Pancreas (tissue), 10 donors: ENCODE measurements at regions of chr1 and their contacts with region 1.

Region 1: DNA sequence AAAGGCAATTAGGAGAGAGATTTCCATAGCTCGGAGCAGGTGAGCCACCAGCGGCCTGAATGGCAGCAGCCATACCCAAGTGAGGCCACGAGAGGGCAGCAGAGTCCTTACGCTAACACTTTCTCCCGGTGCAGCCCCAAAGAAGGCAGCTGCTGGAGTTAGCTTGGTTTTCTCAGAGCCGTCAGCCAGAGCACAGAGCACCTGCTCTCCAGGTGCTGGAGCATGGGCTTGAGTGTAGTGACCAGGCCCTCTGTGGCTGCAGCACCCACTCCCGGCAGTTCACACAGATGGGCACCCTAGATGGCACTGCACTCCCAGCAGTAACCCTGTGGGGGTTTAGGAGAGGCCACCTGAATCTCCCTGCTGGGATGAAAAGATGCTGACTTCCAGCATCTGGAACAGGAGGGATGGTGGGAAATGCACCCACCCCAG is 45.8 kb downstream of the TMCC2 start:
- DNase-seq: peak; percentile 85 to 96 (median 92)
- ATAC-seq: peak; percentile 73 to 91 (median 84)
- H3K4me3 ChIP-seq: no peak overlapping the region
- H3K27ac ChIP-seq: peak overlapping the region; percentile 49 to 72 (median 57)
- H3K4me1 ChIP-seq: peaks cover 14 to 17% (median 16%) of the 10 kb centered on the region in 3 donors
- H3K27me3 ChIP-seq: no peaks in the 10 kb centered on the region
- CTCF ChIP-seq: peak; percentile 97 to 99 (median 98)

Region 2: GRCh38 chr1:205325334-205325884 is 51.8 kb after region 1 on chr1:
- intact Hi-C with region 1: loop called (anchors 1 to 5 kb)
- DNase-seq: peak in 4 of 6 donors; percentile 34 to 83 (median 62)
- ATAC-seq: peak; percentile 30 to 68 (median 63)
- H3K4me3 ChIP-seq: no peak overlapping the region
- H3K27ac ChIP-seq: peak overlapping the region in 2 of 4 donors; percentile 59 to 64
- H3K4me1 ChIP-seq: peaks cover 0 to 13% (median 4%) of the 10 kb centered on the region in 3 donors
- H3K27me3 ChIP-seq: no peaks in the 10 kb centered on the region
- CTCF ChIP-seq: peak; percentile 61 to 79 (median 65)